Body of pancreas (tissue), 4 donors: ENCODE measurements at regions of chr9 and their contacts with region 1.

Region 1: DNA sequence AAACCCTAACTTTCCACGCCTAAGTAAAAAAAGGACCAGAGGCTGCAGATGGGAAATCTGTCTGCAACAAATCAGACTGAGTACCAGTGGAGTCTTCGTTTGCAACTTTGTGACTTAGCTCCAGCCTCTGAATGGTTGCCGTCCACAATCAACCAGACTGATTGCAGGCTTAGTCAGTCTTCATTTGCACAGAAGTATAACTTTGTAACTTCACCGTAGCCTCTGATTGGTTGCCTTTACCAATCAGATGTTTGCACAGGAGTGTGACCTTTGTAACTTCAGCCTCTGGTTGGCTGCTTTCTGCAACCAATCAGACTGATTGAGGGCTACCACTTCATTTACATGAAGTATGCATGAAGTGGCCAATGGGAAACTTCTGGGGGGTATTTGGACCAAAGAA is 53.7 kb downstream of the TGFBR1 start:
- DNase-seq: peak in 1 of 4 donors; percentile 31
- ATAC-seq: no peak
- H3K4me3 ChIP-seq: no peak overlapping the region
- H3K27ac ChIP-seq: no peak overlapping the region
- H3K4me1 ChIP-seq: no peaks in the 10 kb centered on the region
- H3K27me3 ChIP-seq: no peaks in the 10 kb centered on the region
- CTCF ChIP-seq: no peak
- POLR2A ChIP-seq: no peak

Region 2: GRCh38 chr9:99092643-99093491 is 65.8 kb before region 1 on chr9:
- intact Hi-C with region 1: loop called (anchors 10 kb)
- DNase-seq: no peak
- ATAC-seq: no peak
- H3K4me3 ChIP-seq: no peak overlapping the region
- H3K27ac ChIP-seq: no peak overlapping the region
- H3K4me1 ChIP-seq: no peaks in the 10 kb centered on the region
- H3K27me3 ChIP-seq: no peaks in the 10 kb centered on the region
- CTCF ChIP-seq: no peak
- POLR2A ChIP-seq: no peak